Natural killer cell (primary cell): ENCODE measurements at regions of chr5 and their contacts with region 1.

Region 1: GRCh38 chr5:141618804-141619554 is at the start of gene DIAPH1:
- DNase-seq: peak; percentile 96 to 98
- ATAC-seq: peak; percentile 93 to 99 (median 95)
- H3K4me3 ChIP-seq: peak within 1 kb of the TSS; percentile 98
- H3K4me3 Mint-ChIP-seq: peak within 1 kb of the TSS; percentile 100
- H3K27ac ChIP-seq: peak within 1 kb of the TSS; percentile 95
- H3K27ac Mint-ChIP-seq: peak within 1 kb of the TSS; percentile 93 to 96
- H3K4me1 ChIP-seq: peaks cover 26% of the 10 kb centered on the region
- H3K4me1 Mint-ChIP-seq: peaks cover 37 to 38% of the 10 kb centered on the region in 2 donors
- H3K27me3 ChIP-seq: no peaks in the 10 kb centered on the region
- H3K27me3 Mint-ChIP-seq: no peaks in the 10 kb centered on the region
- CTCF ChIP-seq: peak; percentile 94
- total RNA-seq, gene DIAPH1: 410 to 456 (median 419) TPM

Region 2: DNA sequence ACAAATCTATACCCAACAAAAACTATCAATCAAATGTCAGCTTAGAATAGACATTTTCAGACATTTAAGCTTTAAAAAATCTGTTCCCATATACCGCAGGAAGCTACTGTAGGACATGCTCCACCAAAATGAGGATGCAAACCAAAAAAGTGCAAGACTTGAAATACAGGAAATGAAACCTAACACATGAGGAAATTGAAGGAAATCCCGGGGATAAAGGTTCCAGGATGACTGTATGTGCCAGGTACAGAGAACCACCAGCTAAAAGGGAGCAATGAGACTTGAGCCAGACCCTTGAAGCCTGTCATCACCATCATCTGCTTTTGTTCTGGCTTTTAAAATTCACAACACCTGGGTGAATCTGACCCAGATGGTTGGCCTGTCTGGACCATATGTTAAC is 21.6 kb before region 1 on chr5:
- intact Hi-C with region 1: loop called (anchors 1 kb)
- DNase-seq: no peak
- ATAC-seq: no peak
- H3K4me3 ChIP-seq: no peak overlapping the region
- H3K4me3 Mint-ChIP-seq: peak overlapping the region; percentile 10
- H3K27ac ChIP-seq: peak overlapping the region; percentile 60
- H3K27ac Mint-ChIP-seq: peak overlapping the region; percentile 95 to 96
- H3K4me1 ChIP-seq: peaks cover 43% of the 10 kb centered on the region
- H3K4me1 Mint-ChIP-seq: peaks cover 69% of the 10 kb centered on the region in 2 donors
- H3K27me3 ChIP-seq: no peaks in the 10 kb centered on the region
- H3K27me3 Mint-ChIP-seq: no peaks in the 10 kb centered on the region
- CTCF ChIP-seq: no peak

Region 3: DNA sequence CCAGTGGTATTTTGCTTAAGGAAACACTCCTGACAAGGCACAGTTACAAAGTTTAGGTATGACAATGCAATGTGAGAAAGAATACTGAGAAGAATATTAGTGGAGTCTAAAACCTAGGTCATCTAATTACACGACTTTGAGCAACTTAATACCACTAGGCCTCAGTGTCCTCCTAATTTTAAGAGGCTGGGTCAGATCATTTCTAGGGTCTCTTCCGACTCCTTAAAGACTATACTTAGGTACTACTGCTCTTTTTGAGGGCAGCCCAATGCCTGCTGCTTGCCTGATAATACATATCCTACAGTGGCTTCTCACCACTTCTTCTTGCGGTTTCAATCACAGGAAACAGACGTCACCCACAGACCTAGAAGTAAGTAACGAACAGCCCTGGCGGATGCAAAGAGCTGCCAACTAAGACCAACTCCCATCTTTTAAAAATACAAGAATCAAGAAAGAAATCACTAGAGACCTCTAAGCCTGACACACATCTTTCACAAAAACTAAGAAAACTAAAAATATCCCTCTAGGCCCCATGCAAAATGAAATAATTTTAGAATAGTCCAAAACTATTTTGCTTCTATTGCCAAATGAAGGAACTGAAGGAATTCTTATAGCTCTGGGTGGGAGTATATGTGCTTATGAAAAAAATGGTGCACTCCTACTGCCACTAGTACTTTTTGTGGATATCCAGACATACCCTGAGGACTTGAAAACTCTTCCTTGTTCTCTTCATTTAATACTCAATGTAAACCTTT is 13.3 kb before region 1 on chr5:
- intact Hi-C with region 1: loop called (anchors 1 kb)
- DNase-seq: peak; percentile 56 to 94
- ATAC-seq: peak; percentile 88 to 97 (median 96)
- H3K4me3 ChIP-seq: peak overlapping the region; percentile 19
- H3K4me3 Mint-ChIP-seq: peak overlapping the region; percentile 81
- H3K27ac ChIP-seq: peak overlapping the region; percentile 90
- H3K27ac Mint-ChIP-seq: peak overlapping the region; percentile 95 to 96
- H3K4me1 ChIP-seq: peaks cover 54% of the 10 kb centered on the region
- H3K4me1 Mint-ChIP-seq: peaks cover 82 to 84% of the 10 kb centered on the region in 2 donors
- H3K27me3 ChIP-seq: no peaks in the 10 kb centered on the region
- H3K27me3 Mint-ChIP-seq: no peaks in the 10 kb centered on the region
- CTCF ChIP-seq: no peak